ENCODE measurements at regions of chr3 and their contacts with region 1.

Region 1: GRCh38 chr3:150721285-150722130 is 17.8 kb upstream of the ERICH6 start:
- DNase-seq: peak in 3 of 14 experiments; percentile 74 to 82 (median 82)
- ATAC-seq: peak; percentile 87
- H3K4me3 ChIP-seq: no peak overlapping the region
- H3K4me3 Mint-ChIP-seq: no peak overlapping the region
- H3K27ac ChIP-seq: no peak overlapping the region
- H3K27ac Mint-ChIP-seq: no peak overlapping the region
- H3K4me1 ChIP-seq: peaks cover 3% of the 10 kb centered on the region
- H3K4me1 Mint-ChIP-seq: peaks cover 5% of the 10 kb centered on the region
- H3K27me3 ChIP-seq: no peaks in the 10 kb centered on the region
- H3K27me3 Mint-ChIP-seq: no peaks in the 10 kb centered on the region
- CTCF ChIP-seq: peak; percentile 88

Region 2: GRCh38 chr3:150787741-150788370 is 66.3 kb after region 1 on chr3:
- CTCF ChIA-PET with region 1: interaction called, 9 read pairs
- POLR2A ChIA-PET with region 1: no interaction called
- intact Hi-C with region 1: loop called (anchors 2 to 5 kb)
- DNase-seq: peak; percentile 63 to 85 (median 72)
- ATAC-seq: peak; percentile 86
- H3K4me3 ChIP-seq: no peak overlapping the region
- H3K4me3 Mint-ChIP-seq: no peak overlapping the region
- H3K27ac ChIP-seq: no peak overlapping the region
- H3K27ac Mint-ChIP-seq: no peak overlapping the region
- H3K4me1 ChIP-seq: peaks cover 3% of the 10 kb centered on the region
- H3K4me1 Mint-ChIP-seq: no peaks in the 10 kb centered on the region
- H3K27me3 ChIP-seq: no peaks in the 10 kb centered on the region
- H3K27me3 Mint-ChIP-seq: peaks cover 7% of the 10 kb centered on the region
- CTCF ChIP-seq: peak; percentile 98

Region 3: GRCh38 chr3:151086484-151087456 is 365.3 kb after region 1 on chr3:
- CTCF ChIA-PET with region 1: no interaction called
- POLR2A ChIA-PET with region 1: no interaction called
- intact Hi-C with region 1: loop called in 1 of 2 experiments (anchors 5 kb)
- DNase-seq: peak; percentile 33 to 85 (median 58)
- ATAC-seq: peak; percentile 93
- H3K4me3 ChIP-seq: peak overlapping the region; percentile 50
- H3K4me3 Mint-ChIP-seq: peak overlapping the region; percentile 94
- H3K27ac ChIP-seq: no peak overlapping the region
- H3K27ac Mint-ChIP-seq: no peak overlapping the region
- H3K4me1 ChIP-seq: peaks cover 18% of the 10 kb centered on the region
- H3K4me1 Mint-ChIP-seq: peaks cover 11% of the 10 kb centered on the region
- H3K27me3 ChIP-seq: peaks cover 22 to 40% of the 10 kb centered on the region in 2 experiments
- H3K27me3 Mint-ChIP-seq: peaks cover 52% of the 10 kb centered on the region
- CTCF ChIP-seq: no peak

Region 4: DNA sequence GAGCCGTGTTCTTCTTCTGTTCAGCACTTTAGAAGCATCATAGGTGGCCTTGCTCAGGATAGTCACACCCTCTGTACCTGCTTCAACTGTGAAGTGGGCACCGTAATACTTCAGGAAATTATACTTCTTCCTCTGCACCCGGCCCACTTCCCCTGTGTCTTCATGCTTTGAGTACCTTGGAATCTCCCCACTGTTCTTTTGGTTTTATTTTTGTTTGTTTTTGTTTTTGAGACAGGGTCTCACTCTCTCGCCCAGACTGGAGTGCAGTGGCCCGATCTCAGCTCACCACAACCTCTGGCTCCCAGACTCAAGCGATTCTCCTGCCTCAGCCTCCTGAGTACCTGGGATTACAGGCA is 555.2 kb after region 1 on chr3:
- CTCF ChIA-PET with region 1: no interaction called
- POLR2A ChIA-PET with region 1: no interaction called
- intact Hi-C with region 1: loop called (anchors 5 to 10 kb)
- DNase-seq: peak in 7 of 14 experiments; percentile 5 to 79 (median 29)
- ATAC-seq: peak; percentile 84
- H3K4me3 ChIP-seq: no peak overlapping the region
- H3K4me3 Mint-ChIP-seq: peak overlapping the region; percentile 8
- H3K27ac ChIP-seq: peak overlapping the region; percentile 21 to 45
- H3K27ac Mint-ChIP-seq: peak overlapping the region; percentile 68
- H3K4me1 ChIP-seq: peaks cover 22% of the 10 kb centered on the region
- H3K4me1 Mint-ChIP-seq: peaks cover 39% of the 10 kb centered on the region
- H3K27me3 ChIP-seq: no peaks in the 10 kb centered on the region
- H3K27me3 Mint-ChIP-seq: no peaks in the 10 kb centered on the region
- CTCF ChIP-seq: no peak

Region 5: GRCh38 chr3:151305101-151305750 is 583.7 kb after region 1 on chr3:
- CTCF ChIA-PET with region 1: no interaction called
- POLR2A ChIA-PET with region 1: no interaction called
- intact Hi-C with region 1: no loop called
- DNase-seq: peak in 2 of 14 experiments; percentile 16 to 19
- ATAC-seq: no peak
- H3K4me3 ChIP-seq: no peak overlapping the region
- H3K4me3 Mint-ChIP-seq: no peak overlapping the region
- H3K27ac ChIP-seq: no peak overlapping the region
- H3K27ac Mint-ChIP-seq: no peak overlapping the region
- H3K4me1 ChIP-seq: peaks cover 4% of the 10 kb centered on the region
- H3K4me1 Mint-ChIP-seq: peaks cover 5% of the 10 kb centered on the region
- H3K27me3 ChIP-seq: peaks cover 0 to 4% of the 10 kb centered on the region in 2 experiments
- H3K27me3 Mint-ChIP-seq: peaks cover 8% of the 10 kb centered on the region
- CTCF ChIP-seq: no peak

Measured in CD4-positive, alpha-beta T cell (primary cell).